Heart left ventricle (tissue), 16 donors: ENCODE measurements at regions of chr17 and their contacts with region 1.

Region 1: DNA sequence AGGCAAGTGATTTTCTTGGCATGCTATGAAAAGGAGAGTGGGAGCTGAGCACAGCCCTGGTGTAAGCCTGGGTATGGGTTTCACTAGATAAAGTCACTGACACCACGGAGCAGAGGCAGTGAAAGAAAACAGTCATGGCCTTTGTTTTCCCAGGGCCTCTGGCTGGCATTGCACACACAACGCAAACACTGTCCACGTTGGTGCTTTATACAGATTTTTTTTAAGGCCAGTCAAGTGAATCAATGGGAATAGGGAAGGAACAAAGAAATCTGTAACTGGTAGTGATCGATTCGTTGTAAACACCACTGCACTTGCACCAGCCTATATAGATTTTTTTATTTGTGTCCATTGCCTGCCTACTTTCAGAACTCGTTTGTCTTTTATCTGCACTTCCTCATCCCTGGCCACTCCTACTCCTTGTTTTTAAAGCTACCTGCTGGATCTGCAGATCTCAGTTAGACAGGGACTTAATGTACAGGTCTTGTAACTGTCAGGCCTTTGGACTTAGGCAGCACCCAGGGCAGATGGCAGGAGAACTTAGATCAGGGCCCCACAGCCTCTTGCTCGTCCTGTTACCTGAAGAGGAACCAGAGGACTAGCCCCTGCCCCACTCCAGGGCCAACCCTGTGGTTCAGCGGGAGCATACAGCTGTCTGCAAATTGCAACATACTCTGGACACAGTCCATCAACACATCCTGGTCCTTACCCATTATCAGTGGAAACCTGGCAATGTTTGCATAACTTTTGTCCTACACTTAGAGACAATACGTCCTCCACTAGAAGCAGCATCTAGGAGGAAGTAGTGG is 10.6 kb upstream of the TMIGD1 start:
- DNase-seq: peak; percentile 34 to 67 (median 52)
- ATAC-seq: peak; percentile 86 to 91 (median 90)
- H3K4me3 ChIP-seq: peak overlapping the region in 1 of 12 donors; percentile 12
- H3K27ac ChIP-seq: peak overlapping the region in 11 of 12 donors; percentile 20 to 81 (median 61)
- H3K4me1 ChIP-seq: peaks cover 0 to 51% (median 32%) of the 10 kb centered on the region in 12 donors
- H3K27me3 ChIP-seq: no peaks in the 10 kb centered on the region
- CTCF ChIP-seq: no peak
- POLR2A ChIP-seq: no peak

Region 2: GRCh38 chr17:30116661-30117551 is 227.6 kb before region 1 on chr17 and contains the start of gene NSRP1:
- intact Hi-C with region 1: loop called in 2 of 10 experiments (anchors 5 to 10 kb)
- DNase-seq: peak; percentile 95 to 97 (median 97)
- ATAC-seq: peak; percentile 98 to 99 (median 99)
- H3K4me3 ChIP-seq: peak within 1 kb of the TSS; percentile 37 to 86 (median 69)
- H3K27ac ChIP-seq: peak within 1 kb of the TSS; percentile 83 to 98 (median 94)
- H3K4me1 ChIP-seq: peaks cover 0 to 37% (median 23%) of the 10 kb centered on the region in 12 donors
- H3K27me3 ChIP-seq: no peaks in the 10 kb centered on the region
- CTCF ChIP-seq: no peak
- POLR2A ChIP-seq: peak in 1 of 2 donors; percentile 75
- total RNA-seq, gene NSRP1: 10.6 to 34.3 (median 25.0) TPM

Region 3: GRCh38 chr17:30378824-30379302 is 34.4 kb after region 1 on chr17 and contains the start of gene CPD:
- intact Hi-C with region 1: loop called in 6 of 10 experiments (anchors 2 to 5 kb)
- DNase-seq: peak; percentile 97 to 98 (median 98)
- ATAC-seq: peak; percentile 98 to 99 (median 99)
- H3K4me3 ChIP-seq: peak within 1 kb of the TSS; percentile 73 to 97 (median 88)
- H3K27ac ChIP-seq: peak within 1 kb of the TSS; percentile 71 to 93 (median 89)
- H3K4me1 ChIP-seq: peaks cover 0 to 58% (median 40%) of the 10 kb centered on the region in 12 donors
- H3K27me3 ChIP-seq: no peaks in the 10 kb centered on the region
- CTCF ChIP-seq: peak in 7 of 12 donors; percentile 6 to 42 (median 34)
- POLR2A ChIP-seq: peak; percentile 74 to 93
- total RNA-seq, gene CPD: 18.9 to 54.2 (median 31.8) TPM

Region 4: GRCh38 chr17:30433514-30433913 is 89.0 kb after region 1 on chr17:
- intact Hi-C with region 1: loop called in 2 of 10 experiments (anchors 5 to 10 kb)
- DNase-seq: no peak
- ATAC-seq: peak in 2 of 4 donors; percentile 49 to 64
- H3K4me3 ChIP-seq: no peak overlapping the region
- H3K27ac ChIP-seq: no peak overlapping the region
- H3K4me1 ChIP-seq: peaks cover 0 to 16% (median 0%) of the 10 kb centered on the region in 12 donors
- H3K27me3 ChIP-seq: no peaks in the 10 kb centered on the region
- CTCF ChIP-seq: no peak
- POLR2A ChIP-seq: no peak

Region 5: GRCh38 chr17:30468465-30468864 is 124.0 kb after region 1 on chr17:
- intact Hi-C with region 1: loop called in 3 of 10 experiments (anchors 10 kb)
- DNase-seq: no peak
- ATAC-seq: no peak
- H3K4me3 ChIP-seq: no peak overlapping the region
- H3K27ac ChIP-seq: no peak overlapping the region
- H3K4me1 ChIP-seq: peaks cover 0 to 7% (median 0%) of the 10 kb centered on the region in 12 donors
- H3K27me3 ChIP-seq: no peaks in the 10 kb centered on the region
- CTCF ChIP-seq: no peak
- POLR2A ChIP-seq: no peak

Region 6: GRCh38 chr17:30477083-30477773 is 132.7 kb after region 1 on chr17 and contains the start of gene GOSR1:
- intact Hi-C with region 1: loop called in 4 of 10 experiments (anchors 1 to 10 kb)
- DNase-seq: peak; percentile 94 to 96 (median 94)
- ATAC-seq: peak; percentile 99 to 100 (median 100)
- H3K4me3 ChIP-seq: peak within 1 kb of the TSS; percentile 63 to 94 (median 84)
- H3K27ac ChIP-seq: peak within 1 kb of the TSS; percentile 83 to 97 (median 93)
- H3K4me1 ChIP-seq: peaks cover 0 to 32% (median 19%) of the 10 kb centered on the region in 12 donors
- H3K27me3 ChIP-seq: no peaks in the 10 kb centered on the region
- CTCF ChIP-seq: peak; percentile 70 to 90 (median 81)
- POLR2A ChIP-seq: peak in 1 of 2 donors; percentile 40
- total RNA-seq, gene GOSR1: 24.9 to 39.7 (median 32.0) TPM

Region 7: GRCh38 chr17:30554839-30555751 is 210.6 kb after region 1 on chr17:
- intact Hi-C with region 1: loop called in 1 of 10 experiments (anchors 10 kb)
- DNase-seq: no peak
- ATAC-seq: peak in 2 of 4 donors; percentile 19 to 34
- H3K4me3 ChIP-seq: no peak overlapping the region
- H3K27ac ChIP-seq: no peak overlapping the region
- H3K4me1 ChIP-seq: no peaks in the 10 kb centered on the region
- H3K27me3 ChIP-seq: no peaks in the 10 kb centered on the region
- CTCF ChIP-seq: peak in 9 of 12 donors; percentile 5 to 27 (median 16)
- POLR2A ChIP-seq: no peak

Region 8: DNA sequence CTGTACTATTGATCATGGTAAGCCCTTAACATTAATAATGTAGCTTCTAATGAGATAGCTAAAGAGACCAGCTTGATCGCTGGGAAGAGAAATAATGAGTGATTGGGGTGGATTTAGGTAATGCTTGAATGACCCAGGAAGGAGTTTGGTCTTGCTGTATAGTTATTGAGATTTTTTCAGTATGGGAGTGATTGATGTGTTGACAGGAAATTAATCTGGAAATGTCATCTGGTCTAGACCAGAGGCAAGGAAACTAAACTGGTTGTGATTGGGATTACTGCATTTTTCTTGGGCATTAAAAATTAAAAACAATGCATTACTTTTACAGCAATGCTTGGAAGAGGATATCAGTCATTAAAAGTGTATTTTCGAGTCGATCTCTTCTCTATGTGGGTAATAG is 549.8 kb after region 1 on chr17:
- intact Hi-C with region 1: no loop called
- DNase-seq: no peak
- ATAC-seq: no peak
- H3K4me3 ChIP-seq: no peak overlapping the region
- H3K27ac ChIP-seq: no peak overlapping the region
- H3K4me1 ChIP-seq: no peaks in the 10 kb centered on the region
- H3K27me3 ChIP-seq: no peaks in the 10 kb centered on the region
- CTCF ChIP-seq: no peak
- POLR2A ChIP-seq: no peak